HepG2 (cell line): ENCODE measurements at regions of chr13 and their contacts with region 1.

Region 1: DNA sequence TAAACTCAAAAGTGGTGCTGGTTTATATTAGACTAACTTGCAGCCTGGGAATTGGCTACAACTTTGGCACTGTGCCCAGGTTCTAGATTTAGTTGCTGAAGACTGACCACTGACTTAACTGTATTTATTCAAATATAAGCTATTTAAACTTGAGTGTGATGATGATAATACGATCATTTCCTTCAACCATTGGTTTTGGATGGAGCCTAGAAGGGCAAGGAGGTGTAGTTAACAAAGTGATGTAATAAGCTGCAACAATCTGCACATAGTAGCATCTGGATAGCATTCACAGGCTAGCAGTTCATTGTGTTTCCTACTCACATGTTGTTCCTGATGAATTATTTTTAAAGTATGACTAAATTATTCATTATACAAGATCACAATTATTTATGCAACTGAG is 55.2 kb upstream of the DACH1 start:
- DNase-seq: no peak
- ATAC-seq: no peak
- H3K4me3 ChIP-seq: no peak overlapping the region
- H3K27ac ChIP-seq: no peak overlapping the region
- H3K4me1 ChIP-seq: no peaks in the 10 kb centered on the region
- H3K27me3 ChIP-seq: no peaks in the 10 kb centered on the region
- CTCF ChIP-seq: no peak
- EP300 ChIP-seq: no peak
- POLR2A ChIP-seq: no peak
- RAD21 ChIP-seq: no peak

Region 2: DNA sequence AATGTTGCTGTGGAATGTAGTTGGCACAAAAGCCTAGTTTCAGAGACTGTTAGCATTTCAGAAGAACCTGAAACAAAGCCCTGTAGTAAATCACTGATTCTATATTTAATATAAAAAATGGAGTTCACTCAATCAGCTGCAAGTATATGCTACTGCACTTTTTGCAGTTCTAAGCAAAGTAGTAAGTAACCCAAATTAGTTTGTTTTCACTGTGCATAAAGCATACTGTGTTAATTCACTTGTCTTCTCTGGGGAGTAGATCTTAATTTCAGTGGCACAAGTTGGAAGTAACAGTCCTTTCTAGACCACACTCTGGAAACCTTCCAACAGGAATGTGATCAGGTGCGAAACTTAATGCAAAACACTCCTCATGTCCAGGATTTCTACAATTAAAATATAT is 194.5 kb before region 1 on chr13:
- CTCF ChIA-PET with region 1: no interaction called
- POLR2A ChIA-PET with region 1: no interaction called
- in situ Hi-C with region 1: no loop called
- intact Hi-C with region 1: no loop called
- DNase-seq: no peak
- ATAC-seq: no peak
- H3K4me3 ChIP-seq: no peak overlapping the region
- H3K27ac ChIP-seq: no peak overlapping the region
- H3K4me1 ChIP-seq: no peaks in the 10 kb centered on the region
- H3K27me3 ChIP-seq: no peaks in the 10 kb centered on the region
- CTCF ChIP-seq: no peak
- EP300 ChIP-seq: no peak
- POLR2A ChIP-seq: no peak
- RAD21 ChIP-seq: no peak

Region 3: GRCh38 chr13:71935166-71935840 is 13.1 kb after region 1 on chr13:
- CTCF ChIA-PET with region 1: no interaction called
- POLR2A ChIA-PET with region 1: no interaction called
- in situ Hi-C with region 1: no loop called
- intact Hi-C with region 1: loop called (anchors 1 kb)
- DNase-seq: no peak
- ATAC-seq: no peak
- H3K4me3 ChIP-seq: no peak overlapping the region
- H3K27ac ChIP-seq: no peak overlapping the region
- H3K4me1 ChIP-seq: no peaks in the 10 kb centered on the region
- H3K27me3 ChIP-seq: no peaks in the 10 kb centered on the region
- CTCF ChIP-seq: no peak
- EP300 ChIP-seq: no peak
- POLR2A ChIP-seq: no peak
- RAD21 ChIP-seq: no peak